GM12878 (cell line): ENCODE measurements at regions of chr20 and their contacts with region 1.

Region 1: DNA sequence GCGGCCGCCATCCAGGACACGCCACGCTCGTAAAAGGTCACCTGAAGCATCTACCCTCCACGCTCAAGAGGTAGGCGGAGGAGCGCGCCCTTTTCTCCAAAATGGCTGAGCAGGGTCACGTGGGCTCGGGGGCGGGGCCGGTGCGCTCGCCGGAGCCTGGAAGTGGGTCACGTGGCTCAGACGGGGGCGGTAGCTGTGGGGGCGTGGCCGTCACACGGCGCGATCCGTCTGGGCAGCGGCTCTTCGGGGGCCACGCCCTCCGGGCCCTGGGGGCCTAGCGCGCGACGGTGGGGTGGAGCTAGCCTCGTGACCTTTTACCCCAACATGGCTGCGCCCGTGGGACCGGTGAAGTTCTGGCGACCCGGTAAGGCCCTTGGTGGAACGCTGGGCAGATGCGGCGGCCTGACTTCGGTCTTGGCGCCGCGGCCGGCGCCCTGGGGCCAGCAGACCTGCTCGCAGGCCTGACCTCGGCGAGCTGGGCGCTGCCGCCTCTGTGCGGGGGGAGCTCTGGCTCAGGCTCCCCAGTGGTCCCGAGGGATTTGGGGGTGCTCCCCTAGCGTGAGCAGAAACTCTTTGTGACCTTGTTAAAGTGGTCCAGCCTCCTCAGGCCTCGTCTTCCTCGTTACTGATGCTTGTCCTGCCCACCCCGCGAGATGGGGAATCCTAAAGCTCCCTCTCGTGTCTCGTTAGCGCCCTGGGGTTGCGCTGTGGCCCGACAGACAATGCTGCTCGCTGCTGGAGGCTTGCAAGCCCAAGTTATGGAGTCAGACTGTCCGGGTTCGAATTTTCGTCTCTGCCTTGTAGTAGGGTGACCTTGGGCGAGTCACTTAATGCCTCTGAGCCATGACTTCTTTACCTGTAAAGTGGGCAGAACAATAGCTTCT is at the start of gene DHX35:
- DNase-seq: peak; percentile 91
- ATAC-seq: peak; percentile 98
- H3K4me3 ChIP-seq: peak within 1 kb of the TSS; percentile 88
- H3K27ac ChIP-seq: peak within 1 kb of the TSS; percentile 91
- H3K4me1 ChIP-seq: no peaks in the 10 kb centered on the region
- H3K27me3 ChIP-seq: no peaks in the 10 kb centered on the region
- CTCF ChIP-seq: peak; percentile 19 to 50 (median 38); a peak in 4 of 6 replicates
- EP300 ChIP-seq: peak in 1 of 2 experiments; percentile 34; a peak in 1 of 4 replicates
- POLR2A ChIP-seq: peak; percentile 90
- RAD21 ChIP-seq: peak; percentile 45; the same call in 1 of the 2 replicates
- polyA plus RNA-seq, gene DHX35: 4.3 to 4.4 TPM

Region 2: DNA sequence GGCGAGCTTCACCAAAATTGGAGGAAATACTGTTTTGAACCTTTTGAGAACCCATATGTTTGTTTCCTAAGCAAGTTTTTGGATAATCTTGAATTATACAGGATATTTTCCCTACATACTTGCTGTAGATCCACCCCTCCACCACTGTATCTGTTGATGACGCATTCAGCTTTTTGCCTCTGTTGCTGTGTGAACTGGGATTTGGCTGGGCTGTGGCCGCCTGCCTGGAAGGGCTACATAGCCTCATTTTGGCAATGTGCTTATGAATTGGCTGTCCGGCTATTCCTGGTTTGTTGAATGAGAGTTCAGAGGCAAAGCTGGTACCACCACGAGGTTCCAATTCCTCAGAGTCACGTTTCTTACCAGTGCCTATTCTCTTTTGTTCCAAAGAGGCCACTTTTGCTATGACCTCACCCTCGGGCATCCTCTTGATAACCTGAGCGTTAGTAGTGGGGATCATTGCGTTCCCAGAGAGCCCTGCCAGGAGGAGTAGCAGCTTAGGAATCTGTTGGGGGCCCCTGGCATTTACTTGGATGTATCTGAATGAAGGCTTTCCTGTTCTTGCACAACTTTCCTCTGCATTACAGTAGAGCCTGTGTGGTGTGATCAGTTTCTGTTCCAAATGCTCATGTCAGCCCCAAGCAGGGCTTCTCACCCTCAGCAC is 29.7 kb before region 1 on chr20:
- CTCF ChIA-PET with region 1: interaction called, 24 read pairs
- POLR2A ChIA-PET with region 1: interaction called, 21 read pairs
- RAD21 ChIA-PET with region 1: interaction called, 66 read pairs
- SMC1A ChIA-PET with region 1: interaction called, 37 read pairs
- in situ Hi-C with region 1: no loop called
- intact Hi-C with region 1: loop called (anchors 2 kb)
- DNase-seq: no peak
- ATAC-seq: peak; percentile 38
- H3K4me3 ChIP-seq: peak overlapping the region; percentile 55; the same call in 1 of the 2 replicates
- H3K27ac ChIP-seq: peak overlapping the region; percentile 26; the same call in 1 of the 2 replicates
- H3K4me1 ChIP-seq: peaks cover 12% of the 10 kb centered on the region
- H3K27me3 ChIP-seq: no peaks in the 10 kb centered on the region
- CTCF ChIP-seq: no peak
- EP300 ChIP-seq: no peak
- POLR2A ChIP-seq: no peak
- RAD21 ChIP-seq: no peak

Region 3: DNA sequence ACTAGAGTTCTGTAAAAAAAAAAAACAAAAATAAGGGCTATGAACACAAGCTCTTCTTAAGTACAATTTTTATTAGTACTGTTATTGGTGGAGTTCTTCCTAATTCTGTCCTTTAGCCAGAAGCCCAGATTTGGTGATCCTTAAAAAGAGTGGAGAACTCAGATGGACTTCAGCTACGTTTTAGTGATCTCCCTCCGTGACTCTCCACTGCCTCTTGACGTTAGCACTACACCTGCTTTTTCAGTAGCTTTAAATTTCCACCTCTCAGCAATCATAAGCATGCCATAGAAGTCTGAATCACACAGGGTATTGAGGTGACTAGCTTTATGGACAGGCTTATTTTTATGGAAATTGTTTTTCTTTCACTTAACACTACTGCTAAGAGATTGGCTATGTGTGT is 17.6 kb after region 1 on chr20:
- CTCF ChIA-PET with region 1: interaction called, 22 read pairs
- POLR2A ChIA-PET with region 1: interaction called, 36 read pairs
- RAD21 ChIA-PET with region 1: interaction called, 75 read pairs
- SMC1A ChIA-PET with region 1: interaction called, 237 read pairs
- in situ Hi-C with region 1: no loop called
- intact Hi-C with region 1: no loop called
- DNase-seq: no peak
- ATAC-seq: no peak
- H3K4me3 ChIP-seq: no peak overlapping the region
- H3K27ac ChIP-seq: no peak overlapping the region
- H3K4me1 ChIP-seq: no peaks in the 10 kb centered on the region
- H3K27me3 ChIP-seq: no peaks in the 10 kb centered on the region
- CTCF ChIP-seq: no peak
- EP300 ChIP-seq: no peak
- POLR2A ChIP-seq: no peak
- RAD21 ChIP-seq: no peak

Region 4: GRCh38 chr20:38997622-38998021 is 35.3 kb after region 1 on chr20:
- CTCF ChIA-PET with region 1: interaction called, 94 read pairs
- POLR2A ChIA-PET with region 1: interaction called, 48 read pairs
- RAD21 ChIA-PET with region 1: interaction called, 109 read pairs
- SMC1A ChIA-PET with region 1: interaction called, 90 read pairs
- in situ Hi-C with region 1: no loop called
- intact Hi-C with region 1: loop called (anchors 1 kb)
- DNase-seq: peak; percentile 87
- ATAC-seq: peak; percentile 99
- H3K4me3 ChIP-seq: no peak overlapping the region
- H3K27ac ChIP-seq: peak overlapping the region; percentile 49
- H3K4me1 ChIP-seq: peaks cover 14% of the 10 kb centered on the region
- H3K27me3 ChIP-seq: no peaks in the 10 kb centered on the region
- CTCF ChIP-seq: peak; percentile 49 to 63 (median 52)
- EP300 ChIP-seq: peak; percentile 45 to 59; a peak in 3 of 4 replicates
- POLR2A ChIP-seq: peak; percentile 26; the same call in 1 of the 2 replicates
- RAD21 ChIP-seq: peak; percentile 64

Region 5: GRCh38 chr20:39070484-39071231 is 108.4 kb after region 1 on chr20:
- CTCF ChIA-PET with region 1: no interaction called
- POLR2A ChIA-PET with region 1: no interaction called
- RAD21 ChIA-PET with region 1: no interaction called
- SMC1A ChIA-PET with region 1: no interaction called
- in situ Hi-C with region 1: no loop called
- intact Hi-C with region 1: no loop called
- DNase-seq: no peak
- ATAC-seq: no peak
- H3K4me3 ChIP-seq: no peak overlapping the region
- H3K27ac ChIP-seq: no peak overlapping the region
- H3K4me1 ChIP-seq: no peaks in the 10 kb centered on the region
- H3K27me3 ChIP-seq: peaks cover 0 to 3% of the 10 kb centered on the region in 2 experiments; a peak in 3 of 4 replicates
- CTCF ChIP-seq: no peak
- EP300 ChIP-seq: no peak
- POLR2A ChIP-seq: no peak
- RAD21 ChIP-seq: no peak